ENCODE measurements at regions of chr7 and their contacts with region 1.

Region 1: DNA sequence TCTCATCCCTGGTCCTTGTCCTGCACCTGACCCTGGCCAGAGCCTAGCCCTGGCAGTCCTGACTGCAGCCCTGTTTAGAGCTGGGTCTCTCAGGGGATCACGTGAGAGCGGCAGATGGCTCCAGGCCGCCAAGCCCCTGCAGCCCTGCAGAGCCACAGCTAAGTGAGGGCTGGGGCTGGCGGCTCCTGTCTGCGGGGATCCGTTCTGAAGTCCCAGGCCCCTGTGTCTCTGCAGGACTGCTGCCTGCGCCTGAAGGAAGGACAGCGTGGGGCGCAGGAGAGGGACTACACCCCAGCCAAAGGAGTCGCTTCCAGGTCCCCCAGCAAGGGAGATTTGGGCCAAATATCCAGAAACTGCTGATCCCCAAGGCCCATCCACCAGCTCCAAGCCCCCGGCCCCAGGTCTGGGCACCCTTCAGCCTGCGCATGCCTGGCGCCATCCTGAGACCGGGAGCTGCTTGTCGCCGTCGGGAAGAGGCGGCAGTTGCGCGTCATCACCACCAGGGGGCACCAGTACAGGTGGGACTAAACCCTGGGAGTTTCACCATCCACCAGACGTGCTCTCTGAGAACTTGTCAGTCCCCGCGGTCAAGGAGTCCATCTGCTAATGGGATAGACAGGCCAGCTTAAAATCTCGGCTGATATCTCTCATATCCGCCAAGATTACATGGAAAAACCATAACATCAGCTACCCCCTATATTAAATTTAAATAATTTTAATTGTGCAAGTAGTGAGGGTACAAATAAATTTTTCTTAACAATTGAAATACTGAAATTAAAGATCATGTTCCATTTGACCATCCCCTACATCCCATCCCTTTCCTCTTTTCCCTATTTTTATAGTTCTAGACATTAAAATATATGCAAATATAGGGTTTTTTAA is 25.1 kb upstream of the GHRHR start:
- DNase-seq: peak; percentile 83
- H3K4me3 Mint-ChIP-seq: no peak overlapping the region
- H3K27ac Mint-ChIP-seq: no peak overlapping the region
- H3K4me1 Mint-ChIP-seq: no peaks in the 10 kb centered on the region
- H3K27me3 Mint-ChIP-seq: peaks cover 63% of the 10 kb centered on the region
- CTCF ChIP-seq: peak; percentile 93

Region 2: GRCh38 chr7:30908681-30909080 is 30.0 kb before region 1 on chr7:
- CTCF ChIA-PET with region 1: interaction called, 13 read pairs
- POLR2A ChIA-PET with region 1: no interaction called
- intact Hi-C with region 1: no loop called
- DNase-seq: no peak
- H3K4me3 Mint-ChIP-seq: no peak overlapping the region
- H3K27ac Mint-ChIP-seq: no peak overlapping the region
- H3K4me1 Mint-ChIP-seq: peaks cover 18% of the 10 kb centered on the region
- H3K27me3 Mint-ChIP-seq: no peaks in the 10 kb centered on the region
- CTCF ChIP-seq: no peak

Region 3: DNA sequence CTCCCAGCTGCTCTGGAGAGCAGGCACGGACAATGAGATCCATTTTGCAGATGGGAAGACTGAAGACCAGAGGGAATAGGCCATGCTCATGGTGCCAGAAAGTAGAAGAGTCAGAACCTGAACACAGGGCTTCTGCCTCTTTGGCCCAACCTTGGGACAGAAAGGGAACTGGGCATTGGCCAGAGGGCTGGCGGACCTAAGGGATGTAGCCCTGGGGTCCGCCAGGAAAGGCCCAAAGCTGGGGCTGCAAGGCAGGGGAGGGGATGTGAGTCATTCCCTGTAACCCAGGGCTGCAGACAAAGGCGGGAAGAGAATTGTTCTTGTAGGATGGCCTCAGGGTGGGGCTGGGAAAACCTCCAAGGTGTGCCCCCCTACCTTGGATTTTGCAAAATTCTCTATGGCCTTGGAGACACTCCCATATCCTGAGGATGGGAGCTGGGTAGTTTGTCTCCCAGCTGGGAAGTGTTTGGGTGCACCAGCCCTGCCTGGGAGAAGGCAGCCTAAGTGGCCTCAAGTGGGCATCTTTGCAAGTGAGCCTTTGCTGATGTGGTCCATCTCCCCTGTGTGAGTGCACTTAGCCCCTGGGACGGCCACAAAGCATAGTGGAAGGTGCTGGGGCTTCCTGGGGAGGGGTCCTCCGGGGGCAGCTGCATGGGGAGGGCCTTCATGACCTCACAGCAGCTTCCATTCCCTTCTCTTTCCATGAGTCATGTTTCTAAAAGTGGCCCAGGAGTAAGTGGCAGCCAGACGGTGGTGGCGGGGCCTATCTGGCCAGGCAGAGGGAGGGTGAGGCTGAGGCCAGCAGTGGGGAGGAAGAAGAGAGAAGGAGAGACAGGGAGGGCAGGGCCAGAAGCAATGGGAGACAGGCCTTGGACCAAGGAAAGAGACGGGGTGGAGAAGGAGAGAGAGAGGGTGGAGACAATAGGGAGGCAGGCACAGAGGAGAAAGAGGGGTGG is 17.8 kb before region 1 on chr7:
- CTCF ChIA-PET with region 1: interaction called, 18 read pairs
- POLR2A ChIA-PET with region 1: interaction called, 3 read pairs
- intact Hi-C with region 1: no loop called
- DNase-seq: peak; percentile 50
- H3K4me3 Mint-ChIP-seq: no peak overlapping the region
- H3K27ac Mint-ChIP-seq: no peak overlapping the region
- H3K4me1 Mint-ChIP-seq: peaks cover 18% of the 10 kb centered on the region
- H3K27me3 Mint-ChIP-seq: no peaks in the 10 kb centered on the region
- CTCF ChIP-seq: no peak

Region 4: GRCh38 chr7:30954914-30955313 is 16.2 kb after region 1 on chr7:
- CTCF ChIA-PET with region 1: interaction called, 10 read pairs
- POLR2A ChIA-PET with region 1: no interaction called
- intact Hi-C with region 1: no loop called
- DNase-seq: no peak
- H3K4me3 Mint-ChIP-seq: no peak overlapping the region
- H3K27ac Mint-ChIP-seq: no peak overlapping the region
- H3K4me1 Mint-ChIP-seq: no peaks in the 10 kb centered on the region
- H3K27me3 Mint-ChIP-seq: peaks cover 87% of the 10 kb centered on the region
- CTCF ChIP-seq: no peak

Region 5: GRCh38 chr7:30965372-30965771 is 26.7 kb after region 1 on chr7:
- CTCF ChIA-PET with region 1: interaction called, 10 read pairs
- POLR2A ChIA-PET with region 1: no interaction called
- intact Hi-C with region 1: no loop called
- DNase-seq: peak; percentile 22
- H3K4me3 Mint-ChIP-seq: no peak overlapping the region
- H3K27ac Mint-ChIP-seq: no peak overlapping the region
- H3K4me1 Mint-ChIP-seq: no peaks in the 10 kb centered on the region
- H3K27me3 Mint-ChIP-seq: peaks cover 62% of the 10 kb centered on the region
- CTCF ChIP-seq: no peak

Region 6: GRCh38 chr7:30974605-30975255 is 36.1 kb after region 1 on chr7:
- CTCF ChIA-PET with region 1: interaction called, 13 read pairs
- POLR2A ChIA-PET with region 1: interaction called, 3 read pairs
- intact Hi-C with region 1: loop called (anchors 1 kb)
- DNase-seq: peak; percentile 77
- H3K4me3 Mint-ChIP-seq: no peak overlapping the region
- H3K27ac Mint-ChIP-seq: no peak overlapping the region
- H3K4me1 Mint-ChIP-seq: no peaks in the 10 kb centered on the region
- H3K27me3 Mint-ChIP-seq: peaks cover 60% of the 10 kb centered on the region
- CTCF ChIP-seq: peak; percentile 71

Measured in MCF 10A (cell line).